WTC11 (cell line): ENCODE measurements at regions of chr1 and their contacts with region 1.

Region 1: DNA sequence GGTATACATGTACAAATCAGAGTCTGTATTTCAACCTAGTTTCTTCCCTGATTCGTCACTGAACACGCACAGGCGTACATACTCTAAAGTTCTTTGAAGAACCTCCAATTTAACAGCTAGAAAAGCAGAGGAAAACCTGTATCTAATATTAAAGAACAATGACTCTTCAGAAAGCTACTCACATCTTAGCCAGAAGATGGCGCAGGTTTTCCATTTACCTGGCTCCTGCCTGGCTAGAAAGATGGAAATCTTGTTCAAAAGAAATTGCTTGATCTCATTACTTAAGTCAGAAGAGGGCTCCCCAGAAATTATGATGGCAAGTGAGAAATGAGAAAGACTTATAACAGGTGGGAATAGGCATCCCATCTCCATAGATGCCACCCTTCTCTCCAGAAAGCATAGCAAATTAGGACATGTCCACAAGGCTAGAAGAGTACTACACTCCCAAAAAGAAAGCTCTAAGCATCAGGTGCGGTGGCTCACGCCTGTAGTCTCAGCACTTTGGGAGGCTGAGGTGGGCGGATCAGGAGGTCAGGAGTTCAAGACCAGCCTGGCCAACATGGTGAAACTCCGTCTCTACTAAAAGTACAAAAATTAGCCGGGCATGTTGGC is 19.0 kb upstream of the L1TD1 start:
- DNase-seq: peak; percentile 45
- ATAC-seq: peak; percentile 21
- H3K4me3 Mint-ChIP-seq: no peak overlapping the region
- H3K27ac Mint-ChIP-seq: peak overlapping the region; percentile 40
- H3K4me1 Mint-ChIP-seq: peaks cover 61% of the 10 kb centered on the region
- H3K27me3 Mint-ChIP-seq: no peaks in the 10 kb centered on the region
- CTCF ChIP-seq: peak; percentile 44

Region 2: GRCh38 chr1:62103880-62104279 is 71.8 kb before region 1 on chr1:
- CTCF ChIA-PET with region 1: no interaction called
- POLR2A ChIA-PET with region 1: no interaction called
- DNase-seq: no peak
- ATAC-seq: peak; percentile 64; the same call in 1 of the 2 replicates
- H3K4me3 Mint-ChIP-seq: peak overlapping the region; percentile 17; the same call in 1 of the 2 replicates
- H3K27ac Mint-ChIP-seq: peak overlapping the region; percentile 88
- H3K4me1 Mint-ChIP-seq: peaks cover 17% of the 10 kb centered on the region
- H3K27me3 Mint-ChIP-seq: no peaks in the 10 kb centered on the region
- CTCF ChIP-seq: no peak

Region 3: GRCh38 chr1:62159940-62160348 is 15.7 kb before region 1 on chr1:
- CTCF ChIA-PET with region 1: interaction called, 10 read pairs
- POLR2A ChIA-PET with region 1: no interaction called
- DNase-seq: no peak
- ATAC-seq: no peak
- H3K4me3 Mint-ChIP-seq: no peak overlapping the region
- H3K27ac Mint-ChIP-seq: no peak overlapping the region
- H3K4me1 Mint-ChIP-seq: no peaks in the 10 kb centered on the region
- H3K27me3 Mint-ChIP-seq: no peaks in the 10 kb centered on the region
- CTCF ChIP-seq: no peak

Region 4: GRCh38 chr1:62229932-62230331 is 54.3 kb after region 1 on chr1:
- CTCF ChIA-PET with region 1: interaction called, 21 read pairs
- POLR2A ChIA-PET with region 1: no interaction called
- DNase-seq: no peak
- ATAC-seq: no peak
- H3K4me3 Mint-ChIP-seq: no peak overlapping the region
- H3K27ac Mint-ChIP-seq: peak overlapping the region; percentile 54
- H3K4me1 Mint-ChIP-seq: peaks cover 62% of the 10 kb centered on the region
- H3K27me3 Mint-ChIP-seq: no peaks in the 10 kb centered on the region; the same call in 1 of the 2 replicates
- CTCF ChIP-seq: no peak

Region 5: GRCh38 chr1:62407405-62408009 is 231.8 kb after region 1 on chr1:
- CTCF ChIA-PET with region 1: interaction called, 19 read pairs
- POLR2A ChIA-PET with region 1: interaction called, 5 read pairs
- DNase-seq: no peak
- ATAC-seq: peak; percentile 65
- H3K4me3 Mint-ChIP-seq: no peak overlapping the region
- H3K27ac Mint-ChIP-seq: no peak overlapping the region
- H3K4me1 Mint-ChIP-seq: peaks cover 14% of the 10 kb centered on the region
- H3K27me3 Mint-ChIP-seq: peaks cover 8% of the 10 kb centered on the region
- CTCF ChIP-seq: peak; percentile 53; the same call in 1 of the 2 replicates